Dorsolateral prefrontal cortex (tissue), 120 donors: ENCODE measurements at regions of chr5 and their contacts with region 1.

Region 1: DNA sequence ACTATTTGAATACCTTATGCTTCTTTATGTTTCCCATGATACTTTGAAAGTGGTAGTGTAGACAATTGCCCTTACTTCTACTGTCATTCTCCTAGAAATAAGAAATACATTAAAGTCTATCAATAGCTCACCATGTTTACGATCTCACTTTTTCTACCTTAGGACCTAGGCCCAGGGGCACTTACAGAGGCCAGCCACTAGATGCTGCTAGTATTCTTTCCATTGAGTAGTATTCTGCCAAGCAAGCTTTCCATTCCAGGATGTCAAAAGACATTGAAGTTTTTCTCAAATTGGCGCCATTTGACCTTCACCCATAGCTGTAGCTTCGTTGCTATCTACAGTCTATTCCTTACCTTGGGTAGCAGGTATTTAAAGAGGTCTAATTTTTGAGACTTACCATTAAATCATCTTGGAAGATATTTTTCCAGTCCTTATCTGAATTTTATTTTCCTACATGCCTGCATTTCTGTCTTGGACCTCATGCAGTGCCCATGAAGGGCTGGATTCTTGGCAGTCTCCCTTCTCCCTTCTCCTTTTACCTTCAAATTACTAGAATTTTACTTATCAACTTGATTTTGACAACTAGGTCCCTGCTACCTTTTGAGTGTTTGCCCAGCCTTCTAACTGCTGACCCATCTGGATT is 246.0 kb upstream of the NUDT12 start:
- DNase-seq: peak in 6 of 10 donors; percentile 36 to 58 (median 46)
- H3K4me3 ChIP-seq: no peak overlapping the region
- H3K27ac ChIP-seq: peak overlapping the region in 9 of 59 donors; percentile 3 to 34 (median 12)
- H3K27me3 ChIP-seq: no peaks in the 10 kb centered on the region
- CTCF ChIP-seq: peak; percentile 76 to 99 (median 89)

Region 2: DNA sequence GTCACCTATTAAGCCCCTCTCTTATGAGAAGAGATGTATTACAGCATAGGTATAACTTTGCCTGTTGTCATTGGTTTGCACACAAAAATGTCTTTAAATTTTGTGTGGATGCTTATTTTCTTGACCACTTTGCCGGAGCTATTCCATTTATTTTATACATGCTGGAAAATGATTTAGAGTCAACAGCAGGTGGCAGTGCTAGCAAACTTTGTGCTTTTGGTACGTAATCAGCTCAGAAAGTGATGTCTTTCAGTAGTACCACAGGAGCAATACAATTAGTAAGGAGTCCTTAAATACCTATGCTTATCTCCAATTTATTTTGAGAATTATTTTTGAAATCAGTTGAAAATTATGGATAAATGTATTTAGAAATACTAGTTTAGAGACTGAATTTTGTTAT is 226.2 kb before region 1 on chr5:
- intact Hi-C with region 1: loop called in 1 of 2 experiments (anchors 10 kb)
- DNase-seq: peak in 3 of 10 donors; percentile 17 to 51 (median 38)
- H3K4me3 ChIP-seq: no peak overlapping the region
- H3K27ac ChIP-seq: no peak overlapping the region
- H3K27me3 ChIP-seq: no peaks in the 10 kb centered on the region
- CTCF ChIP-seq: peak; percentile 38 to 79 (median 65)

Region 3: DNA sequence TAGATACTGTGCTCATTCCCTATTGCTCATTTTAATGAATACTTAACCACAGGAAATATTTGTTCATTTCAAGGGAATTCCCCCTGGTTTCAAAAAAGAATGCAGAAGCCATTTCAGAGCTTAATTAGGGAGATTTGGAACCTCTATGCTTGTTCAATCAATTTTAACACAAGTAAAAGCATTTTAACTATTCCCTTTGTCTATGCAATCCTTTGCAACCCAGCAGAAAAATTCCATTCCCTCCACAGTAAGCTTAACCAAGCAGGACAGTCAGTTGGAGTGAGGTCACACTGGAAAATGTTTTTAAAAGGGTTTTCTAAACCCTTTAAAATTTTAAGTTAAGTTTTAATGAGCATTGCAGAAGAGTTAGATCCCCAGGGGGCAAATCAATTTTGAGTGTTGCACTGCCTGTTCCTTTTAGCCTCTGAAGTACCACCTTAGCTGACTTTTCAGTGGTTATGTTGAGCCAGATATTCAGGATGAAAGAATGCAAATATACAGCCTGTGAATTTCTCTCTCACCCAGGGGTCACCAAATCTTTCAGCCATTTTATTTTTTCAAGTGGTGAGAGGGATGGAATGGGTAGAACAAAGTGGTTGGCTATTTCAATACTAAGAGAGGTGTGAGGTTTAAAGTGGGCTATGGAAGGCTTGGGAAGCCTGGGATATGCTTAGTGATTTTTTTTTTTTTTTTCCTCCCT is 110.2 kb after region 1 on chr5:
- intact Hi-C with region 1: no loop called
- DNase-seq: no peak
- H3K4me3 ChIP-seq: no peak overlapping the region
- H3K27ac ChIP-seq: no peak overlapping the region
- H3K27me3 ChIP-seq: no peaks in the 10 kb centered on the region
- CTCF ChIP-seq: no peak

Region 4: DNA sequence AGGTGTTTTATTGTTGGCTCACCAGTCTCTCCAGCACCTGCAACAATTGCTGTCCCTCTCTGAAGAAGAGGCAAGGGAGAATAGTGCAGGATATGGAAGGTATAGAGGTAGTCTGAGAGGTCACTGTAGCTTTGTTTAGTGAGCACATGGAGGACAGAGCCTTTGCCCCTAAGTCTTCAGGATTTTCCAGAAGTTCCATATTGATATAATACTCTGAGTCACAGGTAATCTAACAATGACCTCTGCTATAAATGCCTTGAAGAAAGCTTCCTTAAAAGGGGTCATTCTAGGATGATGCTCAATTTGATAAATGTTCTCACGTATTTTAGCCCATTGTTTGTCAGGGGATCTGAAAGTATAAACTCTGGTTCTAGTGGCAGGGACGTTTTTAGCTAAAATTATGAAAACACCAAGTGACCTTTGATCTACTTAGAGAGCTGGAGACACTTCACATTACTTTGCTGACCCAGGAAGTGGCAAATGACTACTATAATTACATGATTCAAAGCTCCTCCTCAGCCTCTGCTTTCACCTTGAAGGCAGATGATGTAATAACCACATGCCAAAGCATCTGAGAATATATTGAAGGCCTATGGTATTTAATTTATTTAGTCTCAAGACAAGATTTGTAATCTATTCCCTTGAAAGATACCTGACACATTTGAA is 120.9 kb after region 1 on chr5:
- intact Hi-C with region 1: loop called in 1 of 2 experiments (anchors 10 kb)
- DNase-seq: no peak
- H3K4me3 ChIP-seq: no peak overlapping the region
- H3K27ac ChIP-seq: no peak overlapping the region
- H3K27me3 ChIP-seq: no peaks in the 10 kb centered on the region
- CTCF ChIP-seq: no peak

Region 5: GRCh38 chr5:104178829-104179456 is 370.4 kb after region 1 on chr5:
- intact Hi-C with region 1: loop called (anchors 2 to 10 kb)
- DNase-seq: peak in 4 of 10 donors; percentile 24 to 57 (median 47)
- H3K4me3 ChIP-seq: no peak overlapping the region
- H3K27ac ChIP-seq: no peak overlapping the region
- H3K27me3 ChIP-seq: no peaks in the 10 kb centered on the region
- CTCF ChIP-seq: peak in 55 of 56 donors; percentile 24 to 81 (median 59)